GM12878 (cell line): ENCODE measurements at regions of chr1 and their contacts with region 1.

Region 1: GRCh38 chr1:16440470-16441281 is at the start of gene NECAP2:
- DNase-seq: peak; percentile 75
- ATAC-seq: peak; percentile 93
- H3K4me3 ChIP-seq: peak within 1 kb of the TSS; percentile 90
- H3K27ac ChIP-seq: peak within 1 kb of the TSS; percentile 89
- H3K4me1 ChIP-seq: peaks cover 18% of the 10 kb centered on the region; the same call in 1 of the 2 replicates
- H3K27me3 ChIP-seq: no peaks in the 10 kb centered on the region
- CTCF ChIP-seq: peak; percentile 90 to 97 (median 91); a peak in 5 of 6 replicates
- EP300 ChIP-seq: no peak
- POLR2A ChIP-seq: peak; percentile 99
- RAD21 ChIP-seq: peak; percentile 40; the same call in 1 of the 2 replicates
- polyA plus RNA-seq, gene NECAP2: 16.3 to 21.1 TPM

Region 2: GRCh38 chr1:16386454-16387113 is 54.1 kb before region 1 on chr1:
- CTCF ChIA-PET with region 1: interaction called, 10 read pairs
- POLR2A ChIA-PET with region 1: interaction called, 9 read pairs
- RAD21 ChIA-PET with region 1: interaction called, 10 read pairs
- SMC1A ChIA-PET with region 1: interaction called, 16 read pairs
- in situ Hi-C with region 1: no loop called
- intact Hi-C with region 1: no loop called
- DNase-seq: no peak
- ATAC-seq: peak; percentile 57
- H3K4me3 ChIP-seq: peak overlapping the region; percentile 44
- H3K27ac ChIP-seq: peak overlapping the region; percentile 77
- H3K4me1 ChIP-seq: peaks cover 37% of the 10 kb centered on the region
- H3K27me3 ChIP-seq: no peaks in the 10 kb centered on the region
- CTCF ChIP-seq: no peak
- EP300 ChIP-seq: no peak
- POLR2A ChIP-seq: no peak
- RAD21 ChIP-seq: no peak

Region 3: DNA sequence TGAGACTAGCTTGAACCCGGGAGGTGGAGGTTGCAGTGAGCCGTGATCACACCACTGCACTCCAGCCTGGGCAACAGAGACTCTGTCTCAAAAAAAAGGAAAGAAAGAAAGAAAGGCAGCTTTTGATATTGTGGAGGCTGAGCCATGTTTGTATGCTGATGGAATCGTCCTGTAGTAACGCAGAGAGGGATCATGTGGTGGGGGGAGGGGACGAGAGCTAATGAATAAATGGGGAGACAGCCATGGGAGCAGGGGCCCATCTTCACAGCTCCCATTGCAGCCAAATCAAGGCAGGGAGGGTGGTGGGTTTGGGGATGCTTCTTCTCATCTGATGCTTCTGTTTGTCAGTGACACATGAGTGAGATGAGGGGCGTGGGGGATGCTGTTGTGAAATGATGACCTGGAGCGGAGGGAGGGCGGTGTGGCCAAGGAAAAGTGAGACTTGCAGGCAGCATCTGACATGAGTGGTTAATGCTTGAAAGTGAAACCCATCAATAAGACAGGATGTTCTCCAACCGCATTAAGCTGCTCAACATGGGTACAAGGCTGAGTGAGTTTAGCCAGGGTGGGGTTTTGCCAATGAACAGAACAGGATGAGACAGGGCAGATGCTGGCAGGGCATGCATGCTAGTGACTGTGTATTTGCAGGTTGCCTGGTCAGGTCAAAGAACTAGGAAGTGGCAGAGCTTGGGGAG is 20.1 kb before region 1 on chr1:
- CTCF ChIA-PET with region 1: interaction called, 40 read pairs
- POLR2A ChIA-PET with region 1: interaction called, 4 read pairs
- RAD21 ChIA-PET with region 1: interaction called, 9 read pairs
- SMC1A ChIA-PET with region 1: interaction called, 6 read pairs
- in situ Hi-C with region 1: no loop called
- intact Hi-C with region 1: no loop called
- DNase-seq: peak; percentile 84
- ATAC-seq: peak; percentile 97
- H3K4me3 ChIP-seq: peak overlapping the region; percentile 23; the same call in 1 of the 2 replicates
- H3K27ac ChIP-seq: no peak overlapping the region
- H3K4me1 ChIP-seq: peaks cover 18% of the 10 kb centered on the region
- H3K27me3 ChIP-seq: no peaks in the 10 kb centered on the region
- CTCF ChIP-seq: no peak
- EP300 ChIP-seq: no peak
- POLR2A ChIP-seq: no peak
- RAD21 ChIP-seq: no peak

Region 4: GRCh38 chr1:16451841-16452528 is 11.3 kb after region 1 on chr1:
- CTCF ChIA-PET with region 1: interaction called, 50 read pairs
- POLR2A ChIA-PET with region 1: interaction called, 10 read pairs
- RAD21 ChIA-PET with region 1: interaction called, 9 read pairs
- SMC1A ChIA-PET with region 1: interaction called, 30 read pairs
- in situ Hi-C with region 1: no loop called
- intact Hi-C with region 1: no loop called
- DNase-seq: no peak
- ATAC-seq: peak; percentile 76
- H3K4me3 ChIP-seq: peak overlapping the region; percentile 39; the same call in 1 of the 2 replicates
- H3K27ac ChIP-seq: peak overlapping the region; percentile 80
- H3K4me1 ChIP-seq: peaks cover 28% of the 10 kb centered on the region
- H3K27me3 ChIP-seq: no peaks in the 10 kb centered on the region
- CTCF ChIP-seq: no peak
- EP300 ChIP-seq: no peak
- POLR2A ChIP-seq: peak; percentile 47; the same call in 1 of the 2 replicates
- RAD21 ChIP-seq: no peak

Region 5: DNA sequence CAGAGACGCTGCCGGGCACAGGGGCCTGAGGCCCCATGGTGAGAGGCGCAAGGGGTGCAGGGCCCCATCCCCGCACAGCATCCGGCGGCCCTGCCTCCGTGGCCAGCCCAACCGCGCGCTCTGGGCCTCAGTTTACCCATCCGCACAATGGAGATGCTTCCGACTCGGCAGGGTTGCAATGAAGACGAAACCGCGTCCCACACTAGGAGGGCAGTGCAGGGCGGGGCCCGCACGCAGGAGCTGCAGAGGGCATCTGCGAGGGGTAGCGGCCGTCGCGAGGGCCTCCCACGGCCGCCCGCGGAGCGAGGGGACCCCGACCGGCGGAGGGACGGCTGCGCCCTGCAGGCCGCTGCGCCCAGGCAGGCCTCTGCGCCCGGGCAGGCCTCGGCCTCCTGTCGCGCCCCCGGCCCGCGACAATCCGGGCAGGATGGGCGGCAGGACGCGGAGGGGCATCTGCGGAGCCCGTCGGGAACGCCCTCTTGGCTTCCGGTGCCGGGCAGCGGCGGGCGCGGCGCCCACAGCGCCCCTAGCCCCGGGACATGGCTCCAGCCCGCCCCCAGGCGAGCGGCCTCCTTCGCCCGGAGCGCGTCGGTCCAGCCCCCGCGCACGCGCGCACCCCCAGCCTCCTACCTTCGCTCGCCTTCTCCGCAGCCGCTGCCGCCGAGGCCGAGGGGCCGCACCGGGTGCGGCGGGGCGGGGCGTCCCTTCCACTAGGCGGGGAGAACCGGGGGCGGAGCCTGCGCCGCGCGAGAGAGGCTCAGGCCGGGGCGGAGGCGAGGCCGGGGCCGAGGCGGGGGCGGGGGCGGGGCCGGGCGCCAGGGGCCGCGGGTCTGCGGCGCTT is 58.1 kb after region 1 on chr1:
- CTCF ChIA-PET with region 1: interaction called, 7 read pairs
- POLR2A ChIA-PET with region 1: interaction called, 3 read pairs
- RAD21 ChIA-PET with region 1: no interaction called
- SMC1A ChIA-PET with region 1: interaction called, 3 read pairs
- in situ Hi-C with region 1: no loop called
- intact Hi-C with region 1: loop called (anchors 5 kb)
- DNase-seq: peak; percentile 32
- ATAC-seq: peak; percentile 98
- H3K4me3 ChIP-seq: peak overlapping the region; percentile 87
- H3K27ac ChIP-seq: no peak overlapping the region
- H3K4me1 ChIP-seq: peaks cover 3% of the 10 kb centered on the region; the same call in 1 of the 2 replicates
- H3K27me3 ChIP-seq: no peaks in the 10 kb centered on the region; a peak in 1 of 4 replicates
- CTCF ChIP-seq: peak in 1 of 3 experiments; percentile 26; a peak in 2 of 6 replicates
- EP300 ChIP-seq: no peak
- POLR2A ChIP-seq: peak; percentile 61; the same call in 1 of the 2 replicates
- RAD21 ChIP-seq: no peak

Region 6: DNA sequence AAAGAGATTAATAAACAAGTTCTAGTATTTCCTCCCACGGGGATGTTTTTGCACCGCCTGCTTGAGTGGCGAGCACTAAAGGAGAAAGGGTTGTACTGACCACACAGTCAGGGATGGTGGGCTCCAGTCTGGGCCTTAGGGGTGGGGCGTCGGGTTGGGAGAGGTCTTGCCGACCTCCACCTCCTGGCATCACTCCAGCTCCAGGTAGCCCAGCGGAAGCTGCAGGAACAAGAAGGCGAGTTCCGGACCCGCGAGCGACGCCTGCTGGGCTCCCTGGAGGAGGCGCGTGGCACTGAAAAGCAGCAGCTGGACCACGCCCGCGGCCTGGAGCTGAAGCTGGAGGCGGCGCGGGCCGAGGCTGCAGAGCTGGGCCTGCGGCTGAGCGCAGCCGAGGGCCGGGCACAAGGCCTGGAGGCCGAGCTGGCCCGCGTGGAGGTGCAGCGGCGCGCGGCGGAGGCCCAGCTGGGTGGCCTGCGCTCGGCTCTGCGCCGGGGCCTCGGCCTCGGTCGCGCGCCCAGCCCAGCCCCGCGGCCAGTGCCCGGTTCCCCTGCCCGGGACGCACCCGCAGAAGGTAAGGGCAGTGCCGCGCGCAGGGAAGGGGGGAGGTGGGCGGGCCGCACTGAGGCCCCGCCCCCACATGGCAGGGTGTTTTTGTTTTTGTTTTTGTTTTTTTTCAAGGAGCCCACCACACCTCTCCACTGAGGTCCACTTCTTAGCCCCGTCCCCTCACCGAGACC is 520.1 kb after region 1 on chr1:
- CTCF ChIA-PET with region 1: no interaction called
- POLR2A ChIA-PET with region 1: no interaction called
- RAD21 ChIA-PET with region 1: no interaction called
- SMC1A ChIA-PET with region 1: no interaction called
- in situ Hi-C with region 1: no loop called
- intact Hi-C with region 1: loop called (anchors 10 kb)
- DNase-seq: peak; percentile 7
- ATAC-seq: peak; percentile 95
- H3K4me3 ChIP-seq: peak overlapping the region; percentile 43; the same call in 1 of the 2 replicates
- H3K27ac ChIP-seq: no peak overlapping the region
- H3K4me1 ChIP-seq: no peaks in the 10 kb centered on the region
- H3K27me3 ChIP-seq: no peaks in the 10 kb centered on the region
- CTCF ChIP-seq: peak; percentile 69 to 85 (median 70)
- EP300 ChIP-seq: no peak
- POLR2A ChIP-seq: no peak
- RAD21 ChIP-seq: peak; percentile 44